Aorta (tissue), 5 donors: ENCODE measurements at regions of chr7 and their contacts with region 1.

Region 1: GRCh38 chr7:26864309-26865093 is at the start of gene SKAP2:
- DNase-seq: peak; percentile 99
- ATAC-seq: peak; percentile 99
- H3K4me3 ChIP-seq: peak within 1 kb of the TSS; percentile 45 to 66
- H3K27ac ChIP-seq: peak within 1 kb of the TSS in 1 of 2 donors; percentile 19
- H3K4me1 ChIP-seq: no peaks in the 10 kb centered on the region
- H3K27me3 ChIP-seq: no peaks in the 10 kb centered on the region
- total RNA-seq, gene SKAP2: 43.4 to 48.5 TPM

Region 2: GRCh38 chr7:26376175-26376917 is 488.2 kb before region 1 on chr7:
- intact Hi-C with region 1: loop called in 1 of 2 experiments (anchors 10 kb)
- DNase-seq: peak; percentile 51 to 77
- ATAC-seq: peak; percentile 80
- H3K4me3 ChIP-seq: no peak overlapping the region
- H3K27ac ChIP-seq: no peak overlapping the region
- H3K4me1 ChIP-seq: no peaks in the 10 kb centered on the region
- H3K27me3 ChIP-seq: peaks cover 0 to 3% of the 10 kb centered on the region in 2 donors

Region 3: DNA sequence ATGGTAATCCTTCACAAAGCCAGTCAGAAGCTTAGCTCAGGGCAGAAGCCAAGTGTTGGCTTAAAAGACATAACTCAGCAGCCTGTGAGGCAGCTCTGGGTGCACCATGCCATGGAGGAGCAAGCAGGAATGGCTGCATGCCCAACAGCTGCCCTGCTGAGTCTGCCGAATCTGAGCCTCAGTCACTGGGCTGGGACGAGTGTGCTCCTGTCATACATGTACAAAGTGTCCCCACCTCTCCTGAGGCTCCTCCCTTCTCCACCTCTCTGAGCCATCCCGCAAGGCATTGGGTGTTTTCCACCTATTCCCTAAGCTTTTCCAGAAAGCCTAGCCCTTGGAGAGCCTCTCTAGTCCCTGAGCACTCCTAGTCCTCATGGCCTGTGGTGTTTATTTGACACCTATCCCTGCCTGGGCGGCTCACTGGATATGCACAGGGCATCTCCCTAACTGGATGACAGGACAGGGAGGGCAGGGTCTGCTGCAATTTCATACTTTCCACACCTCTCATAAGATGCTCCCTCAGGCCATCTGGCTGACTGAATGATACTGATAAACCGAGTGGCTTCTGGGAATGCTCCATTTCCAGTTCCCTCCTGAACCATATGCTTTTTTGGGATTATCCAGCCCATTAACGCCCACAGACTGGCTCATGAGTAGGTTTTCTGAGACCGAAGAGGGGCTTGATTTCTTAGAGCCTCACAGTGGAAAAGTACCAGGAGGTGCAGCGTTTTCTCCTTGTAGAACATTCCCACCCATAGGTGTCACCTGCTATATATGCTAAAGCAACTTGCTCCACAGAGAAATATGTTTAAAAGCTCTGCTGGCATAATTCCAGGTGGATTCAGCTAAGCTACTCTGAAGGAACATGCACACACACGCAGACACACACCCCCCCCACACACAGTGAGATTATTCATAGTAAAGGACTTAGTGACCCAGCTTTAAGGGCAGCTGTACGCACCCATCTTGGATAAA is 373.6 kb before region 1 on chr7:
- intact Hi-C with region 1: no loop called
- DNase-seq: no peak
- ATAC-seq: no peak
- H3K4me3 ChIP-seq: no peak overlapping the region
- H3K27ac ChIP-seq: no peak overlapping the region
- H3K4me1 ChIP-seq: no peaks in the 10 kb centered on the region
- H3K27me3 ChIP-seq: no peaks in the 10 kb centered on the region

Region 4: DNA sequence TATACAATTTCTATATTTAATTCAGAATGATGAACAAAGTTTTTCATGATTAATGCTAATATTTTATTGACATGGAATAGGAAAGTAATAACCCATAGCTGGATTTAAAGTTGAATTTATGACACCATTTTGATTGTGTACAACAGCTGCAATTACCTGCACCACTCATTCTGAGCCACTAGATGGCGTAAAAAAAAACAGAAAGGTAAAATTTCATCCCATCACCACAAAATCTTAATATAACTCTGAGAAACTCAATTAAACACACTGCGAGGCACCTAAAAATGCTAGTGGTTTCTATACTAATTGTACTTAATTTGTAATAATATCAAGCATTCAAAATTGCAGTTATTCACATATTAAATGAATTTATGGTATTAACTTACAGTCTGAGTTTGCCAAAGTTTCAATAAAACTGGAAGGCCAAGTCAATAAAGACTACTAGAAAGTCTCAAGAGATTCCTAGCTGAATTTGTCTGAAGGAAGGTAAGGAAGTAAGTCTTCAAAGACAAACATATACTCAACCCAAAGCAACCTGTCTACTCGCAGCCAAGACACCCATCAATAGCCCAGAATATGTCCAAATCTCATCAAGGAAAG is 182.6 kb before region 1 on chr7:
- intact Hi-C with region 1: loop called in 1 of 2 experiments (anchors 5 kb)
- DNase-seq: no peak
- ATAC-seq: peak; percentile 57
- H3K4me3 ChIP-seq: no peak overlapping the region
- H3K27ac ChIP-seq: no peak overlapping the region
- H3K4me1 ChIP-seq: no peaks in the 10 kb centered on the region
- H3K27me3 ChIP-seq: no peaks in the 10 kb centered on the region

Region 5: DNA sequence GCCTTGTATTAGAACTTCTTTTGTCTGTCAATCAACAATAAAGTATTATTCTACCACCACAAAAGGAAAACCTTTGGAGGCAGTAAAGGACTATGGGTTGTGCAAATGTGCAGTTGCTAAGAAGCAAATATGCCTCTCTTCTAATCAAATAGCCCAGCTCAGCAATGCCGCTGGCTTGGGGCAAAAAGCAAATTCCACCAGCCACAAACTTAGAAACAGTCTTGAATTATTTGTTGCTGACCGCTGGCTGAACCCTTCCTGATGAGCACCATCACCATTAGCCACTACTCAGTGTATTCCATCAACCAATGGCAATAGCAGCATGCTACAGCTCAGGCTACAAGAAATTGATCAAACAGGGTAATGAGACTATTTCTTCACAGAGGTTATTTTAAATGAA is 51.1 kb before region 1 on chr7:
- intact Hi-C with region 1: no loop called
- DNase-seq: no peak
- ATAC-seq: no peak
- H3K4me3 ChIP-seq: no peak overlapping the region
- H3K27ac ChIP-seq: no peak overlapping the region
- H3K4me1 ChIP-seq: no peaks in the 10 kb centered on the region
- H3K27me3 ChIP-seq: no peaks in the 10 kb centered on the region

Region 6: GRCh38 chr7:26841003-26841739 is 23.3 kb before region 1 on chr7:
- intact Hi-C with region 1: no loop called
- DNase-seq: no peak
- ATAC-seq: no peak
- H3K4me3 ChIP-seq: no peak overlapping the region
- H3K27ac ChIP-seq: no peak overlapping the region
- H3K4me1 ChIP-seq: no peaks in the 10 kb centered on the region
- H3K27me3 ChIP-seq: no peaks in the 10 kb centered on the region

Region 7: GRCh38 chr7:26912371-26912770 is 47.9 kb after region 1 on chr7:
- intact Hi-C with region 1: no loop called
- DNase-seq: no peak
- ATAC-seq: no peak
- H3K4me3 ChIP-seq: no peak overlapping the region
- H3K27ac ChIP-seq: no peak overlapping the region
- H3K4me1 ChIP-seq: no peaks in the 10 kb centered on the region
- H3K27me3 ChIP-seq: no peaks in the 10 kb centered on the region

Region 8: GRCh38 chr7:27031289-27032172 is 167.0 kb after region 1 on chr7:
- intact Hi-C with region 1: loop called in 1 of 2 experiments (anchors 10 kb)
- DNase-seq: no peak
- ATAC-seq: peak; percentile 26
- H3K4me3 ChIP-seq: no peak overlapping the region
- H3K27ac ChIP-seq: peak overlapping the region in 1 of 2 donors; percentile 92
- H3K4me1 ChIP-seq: no peaks in the 10 kb centered on the region
- H3K27me3 ChIP-seq: no peaks in the 10 kb centered on the region

Region 9: DNA sequence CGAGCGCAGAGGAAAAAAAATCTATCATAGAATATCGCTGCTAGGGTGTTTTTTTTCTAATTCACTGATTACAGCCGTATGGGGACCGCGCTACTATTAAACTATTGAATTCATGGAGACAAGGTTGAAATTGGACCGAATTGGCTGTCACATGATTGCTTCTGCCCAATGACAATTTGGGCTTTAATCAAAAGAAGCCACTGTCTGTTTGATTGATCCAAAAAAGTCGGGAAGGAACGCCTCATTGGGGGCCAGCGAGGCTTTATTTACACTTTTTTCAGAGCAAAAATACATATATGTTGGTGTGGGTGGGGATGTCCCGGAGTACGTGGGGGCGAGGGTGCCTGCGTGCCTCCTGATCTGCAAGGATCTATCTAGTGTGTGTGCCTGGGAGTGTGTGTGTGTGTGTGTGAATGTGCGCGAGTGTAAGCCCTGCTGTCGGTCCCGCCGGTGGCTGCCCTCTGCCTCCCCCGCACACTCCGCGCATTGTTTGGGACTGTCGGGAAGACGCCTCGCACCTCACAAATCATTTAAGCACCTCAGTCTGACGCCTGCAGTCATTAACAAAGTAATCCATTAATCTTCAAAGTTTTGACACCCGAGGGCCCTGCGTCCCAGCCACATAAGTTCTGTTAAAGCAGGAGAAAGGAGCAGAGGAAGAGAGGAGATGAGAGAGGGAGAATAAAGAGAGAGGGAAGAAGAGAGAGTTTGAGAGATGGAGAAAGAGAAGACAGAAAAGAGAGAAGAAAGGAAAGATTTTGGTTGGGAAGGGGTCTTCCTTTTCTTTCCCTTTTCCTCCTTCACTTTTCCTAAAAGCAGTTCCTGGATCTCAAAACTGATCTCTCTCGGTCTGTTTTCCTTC is 238.3 kb after region 1 on chr7 and contains the start of gene HOXA2:
- intact Hi-C with region 1: loop called in 1 of 2 experiments (anchors 5 kb)
- DNase-seq: peak; percentile 66 to 72
- ATAC-seq: peak; percentile 49
- H3K4me3 ChIP-seq: peak within 1 kb of the TSS; percentile 24 to 78
- H3K27ac ChIP-seq: peak within 1 kb of the TSS; percentile 93 to 100
- H3K4me1 ChIP-seq: no peaks in the 10 kb centered on the region
- H3K27me3 ChIP-seq: no peaks in the 10 kb centered on the region
- total RNA-seq, gene HOXA2: 1.6 to 4.7 TPM